ENCODE measurements at regions of chr7 and their contacts with region 1.

Region 1: DNA sequence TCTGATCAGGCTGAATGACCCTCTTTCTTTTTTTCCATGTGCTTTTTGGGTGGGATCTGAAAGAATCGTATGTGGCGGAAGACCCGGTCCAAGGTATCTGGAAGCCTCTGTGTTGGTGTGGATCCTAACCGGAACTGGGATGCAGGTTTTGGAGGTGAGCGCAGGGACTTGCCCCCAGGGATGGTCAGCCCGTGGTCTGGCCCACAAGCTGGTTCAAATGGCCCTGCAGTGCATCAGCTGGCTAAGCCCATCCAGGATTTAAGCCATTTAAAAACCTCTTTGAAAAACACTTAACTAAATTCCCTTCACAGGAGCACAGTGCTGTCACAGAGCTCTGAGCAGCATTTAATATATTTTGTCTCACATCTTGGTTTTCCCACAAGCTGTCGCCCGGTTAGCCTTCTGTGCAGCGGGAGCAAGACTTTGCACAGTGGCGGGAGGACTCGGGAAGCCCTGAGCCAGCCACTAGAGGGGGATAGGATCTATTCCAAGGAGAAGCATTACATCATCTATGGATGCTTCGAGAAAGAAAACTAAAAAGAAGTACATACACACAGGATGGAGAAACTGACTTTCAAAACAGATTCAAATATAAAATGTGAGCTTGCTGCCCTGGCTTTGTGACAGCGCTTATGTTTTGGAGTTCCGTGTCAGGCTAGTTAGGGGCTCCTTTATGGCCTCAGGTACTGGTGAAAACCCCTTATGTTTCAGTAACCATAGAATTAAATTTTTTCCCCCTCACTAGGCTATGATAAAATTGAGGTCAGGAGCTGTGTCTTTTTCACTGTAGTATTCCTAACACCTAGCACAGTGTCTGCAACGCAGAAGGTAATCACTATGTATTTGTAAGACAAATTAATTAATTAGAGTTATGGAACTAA is 11.3 kb downstream of the CPA2 start:
- DNase-seq: peak; percentile 78
- ATAC-seq: peak; percentile 88

Region 2: GRCh38 chr7:130263130-130263529 is 14.9 kb before region 1 on chr7:
- intact Hi-C with region 1: no loop called
- DNase-seq: no peak
- ATAC-seq: no peak

Region 3: GRCh38 chr7:130309986-130310385 is 32.0 kb after region 1 on chr7:
- intact Hi-C with region 1: no loop called
- DNase-seq: no peak
- ATAC-seq: no peak

Region 4: DNA sequence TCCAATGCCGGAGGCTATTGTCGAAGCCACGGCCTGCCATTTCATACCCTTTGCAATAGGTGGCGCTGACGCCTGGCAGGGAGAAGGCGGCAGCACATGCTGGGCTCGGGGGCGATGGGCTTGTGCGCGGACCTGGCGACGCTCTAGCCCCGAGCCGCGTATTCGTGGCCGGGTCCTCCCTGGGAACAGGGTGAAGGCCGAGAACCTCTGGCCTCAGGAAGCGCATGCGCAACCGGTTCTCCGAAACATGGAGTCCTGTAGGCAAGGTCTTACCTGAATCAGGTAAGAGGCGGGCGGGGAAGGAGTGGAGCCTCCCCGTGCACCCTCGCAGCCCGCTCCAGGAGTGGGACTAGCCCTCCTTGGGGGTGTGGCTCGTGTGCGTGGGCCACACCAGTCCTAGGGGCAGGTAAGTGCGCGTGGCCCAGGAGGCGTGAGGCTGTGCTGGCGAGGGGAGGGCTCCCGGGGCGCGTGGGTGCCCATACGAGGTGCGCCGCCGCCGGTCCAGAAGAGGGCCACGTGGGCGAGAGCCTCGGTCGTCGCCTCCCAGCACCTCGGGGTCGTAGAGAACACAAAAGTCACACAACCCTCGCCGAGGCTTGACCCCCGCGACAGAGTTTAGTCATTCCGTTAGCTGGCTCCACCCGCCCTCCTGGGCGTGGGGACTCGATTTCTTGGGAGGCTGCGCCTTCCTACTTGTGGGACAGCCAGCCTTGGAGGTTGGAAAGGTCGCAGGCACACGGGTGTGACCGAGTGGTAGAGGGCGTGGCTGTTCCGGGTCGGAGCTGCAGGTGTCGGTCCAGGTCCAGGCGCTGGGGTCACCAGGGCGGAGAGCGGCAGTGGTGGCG is 208.3 kb after region 1 on chr7:
- intact Hi-C with region 1: loop called (anchors 10 kb)
- DNase-seq: peak; percentile 73
- ATAC-seq: peak; percentile 63

Measured in sciatic nerve (tissue), 2 donors.